ENCODE measurements at regions of chr6 and their contacts with region 1.

Region 1: GRCh38 chr6:3023663-3024483 is 24.2 kb downstream of the NQO2 start:
- DNase-seq: peak; percentile 96 to 98
- ATAC-seq: peak; percentile 93 to 94 (median 94)
- H3K4me3 ChIP-seq: peak overlapping the region; percentile 72
- H3K27ac ChIP-seq: peak overlapping the region; percentile 97
- H3K4me1 ChIP-seq: peaks cover 46% of the 10 kb centered on the region
- H3K27me3 ChIP-seq: no peaks in the 10 kb centered on the region
- CTCF ChIP-seq: no peak

Region 2: GRCh38 chr6:2999618-3000557 is 24.0 kb before region 1 on chr6 and contains the start of gene NQO2:
- intact Hi-C with region 1: loop called (anchors 1 kb)
- DNase-seq: peak; percentile 93 to 96
- ATAC-seq: peak; percentile 84 to 87 (median 84)
- H3K4me3 ChIP-seq: peak within 1 kb of the TSS; percentile 95
- H3K27ac ChIP-seq: peak within 1 kb of the TSS; percentile 99
- H3K4me1 ChIP-seq: peaks cover 20% of the 10 kb centered on the region
- H3K27me3 ChIP-seq: no peaks in the 10 kb centered on the region
- CTCF ChIP-seq: no peak
- total RNA-seq, gene NQO2: 42.8 to 129 (median 101) TPM

Region 3: GRCh38 chr6:3005874-3006273 is 18.0 kb before region 1 on chr6:
- intact Hi-C with region 1: loop called (anchors 1 kb)
- DNase-seq: no peak
- ATAC-seq: no peak
- H3K4me3 ChIP-seq: no peak overlapping the region
- H3K27ac ChIP-seq: no peak overlapping the region
- H3K4me1 ChIP-seq: peaks cover 20% of the 10 kb centered on the region
- H3K27me3 ChIP-seq: no peaks in the 10 kb centered on the region
- CTCF ChIP-seq: no peak

Region 4: DNA sequence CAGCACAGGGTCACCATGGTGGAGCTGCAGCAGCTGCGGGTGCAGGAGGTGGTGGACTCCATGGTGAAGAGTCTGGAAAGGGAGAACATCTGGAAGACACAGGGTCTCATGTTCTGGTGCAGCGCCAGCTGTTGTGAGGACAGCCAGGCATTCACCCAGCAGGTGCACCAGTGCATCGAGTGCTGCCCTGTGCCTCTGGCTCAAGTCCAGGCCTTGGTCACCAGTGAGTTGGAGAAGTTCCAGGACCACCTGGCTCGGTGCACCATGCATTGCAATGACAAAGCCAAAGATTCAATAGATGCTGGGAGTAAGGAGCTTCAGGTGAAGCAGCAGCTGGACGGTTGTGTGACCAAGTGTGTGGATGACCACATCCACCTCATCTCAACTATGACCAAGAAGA is 21.5 kb after region 1 on chr6:
- intact Hi-C with region 1: loop called in 1 of 2 experiments (anchors 2 kb)
- DNase-seq: no peak
- ATAC-seq: no peak
- H3K4me3 ChIP-seq: no peak overlapping the region
- H3K27ac ChIP-seq: no peak overlapping the region
- H3K4me1 ChIP-seq: peaks cover 8% of the 10 kb centered on the region
- H3K27me3 ChIP-seq: no peaks in the 10 kb centered on the region
- CTCF ChIP-seq: no peak

Measured in psoas muscle (tissue), 8 donors.